Dorsolateral prefrontal cortex (tissue), 120 donors: ENCODE measurements at regions of chr5 and their contacts with region 1.

Region 1: GRCh38 chr5:69369369-69370121 is at the starts of genes AK6, RAD17 and TAF9:
- DNase-seq: peak; percentile 89 to 95 (median 94)
- H3K4me3 ChIP-seq: peak within 1 kb of the TSS; percentile 57 to 100 (median 86)
- H3K27ac ChIP-seq: peak within 1 kb of the TSS; percentile 92 to 100 (median 98)
- H3K27me3 ChIP-seq: no peaks in the 10 kb centered on the region
- CTCF ChIP-seq: peak in 11 of 56 donors; percentile 5 to 38 (median 19)
- total RNA-seq, gene AK6: 16.7 to 48.2 (median 30.6) TPM
- total RNA-seq, gene RAD17: 12.6 to 35.3 (median 22.5) TPM
- total RNA-seq, gene TAF9: 26.1 to 76.6 (median 52.9) TPM

Region 2: DNA sequence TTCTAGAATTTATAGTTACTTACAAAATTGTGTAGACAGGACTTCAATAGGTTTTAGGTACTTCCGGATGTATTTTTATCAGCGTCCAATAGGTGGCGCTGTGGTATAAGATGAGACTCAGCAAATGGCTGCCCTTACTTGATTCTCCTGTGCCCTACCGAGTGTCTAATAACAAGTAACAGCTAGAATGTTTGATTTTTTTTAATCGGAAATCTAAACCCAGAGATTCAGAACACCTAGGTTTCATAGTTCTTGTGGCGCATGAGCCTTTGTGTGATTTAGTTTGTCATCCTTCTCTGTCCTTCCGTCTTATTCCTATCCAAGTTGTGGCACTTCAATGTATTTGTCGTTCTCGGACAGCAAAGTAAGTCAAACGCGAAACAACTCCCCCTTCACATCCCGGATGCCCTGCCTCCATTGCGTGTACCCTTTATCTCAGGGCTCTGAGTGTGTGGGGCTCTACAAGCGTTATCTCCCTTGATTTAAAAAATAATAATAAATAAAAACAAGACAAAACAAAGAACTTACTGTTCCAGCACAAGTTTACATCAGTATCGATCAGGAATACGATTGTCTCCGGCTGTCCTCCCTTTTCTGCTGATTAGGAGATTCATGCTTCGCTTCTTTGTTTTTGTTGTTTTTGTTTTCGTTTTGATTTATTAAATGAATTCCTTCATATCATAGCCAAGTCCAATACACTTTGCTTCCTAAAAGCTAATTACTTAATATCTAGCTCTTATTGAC is 326.5 kb before region 1 on chr5:
- intact Hi-C with region 1: loop called in 1 of 2 experiments (anchors 10 kb)
- DNase-seq: peak in 7 of 10 donors; percentile 36 to 78 (median 55)
- H3K4me3 ChIP-seq: peak overlapping the region; percentile 23 to 78 (median 58)
- H3K27ac ChIP-seq: peak overlapping the region; percentile 5 to 93 (median 84)
- H3K27me3 ChIP-seq: no peaks in the 10 kb centered on the region
- CTCF ChIP-seq: peak; percentile 73 to 97 (median 88)

Region 3: GRCh38 chr5:69093771-69094482 is 275.6 kb before region 1 on chr5 and contains the start of gene SLC30A5:
- intact Hi-C with region 1: loop called (anchors 1 to 5 kb)
- DNase-seq: peak; percentile 94 to 100 (median 99)
- H3K4me3 ChIP-seq: peak within 1 kb of the TSS; percentile 56 to 100 (median 92)
- H3K27ac ChIP-seq: peak within 1 kb of the TSS in 58 of 59 donors; percentile 33 to 97 (median 89)
- H3K27me3 ChIP-seq: no peaks in the 10 kb centered on the region
- CTCF ChIP-seq: peak; percentile 84 to 99 (median 96)
- total RNA-seq, gene SLC30A5: 17.3 to 42.7 (median 28.2) TPM

Region 4: DNA sequence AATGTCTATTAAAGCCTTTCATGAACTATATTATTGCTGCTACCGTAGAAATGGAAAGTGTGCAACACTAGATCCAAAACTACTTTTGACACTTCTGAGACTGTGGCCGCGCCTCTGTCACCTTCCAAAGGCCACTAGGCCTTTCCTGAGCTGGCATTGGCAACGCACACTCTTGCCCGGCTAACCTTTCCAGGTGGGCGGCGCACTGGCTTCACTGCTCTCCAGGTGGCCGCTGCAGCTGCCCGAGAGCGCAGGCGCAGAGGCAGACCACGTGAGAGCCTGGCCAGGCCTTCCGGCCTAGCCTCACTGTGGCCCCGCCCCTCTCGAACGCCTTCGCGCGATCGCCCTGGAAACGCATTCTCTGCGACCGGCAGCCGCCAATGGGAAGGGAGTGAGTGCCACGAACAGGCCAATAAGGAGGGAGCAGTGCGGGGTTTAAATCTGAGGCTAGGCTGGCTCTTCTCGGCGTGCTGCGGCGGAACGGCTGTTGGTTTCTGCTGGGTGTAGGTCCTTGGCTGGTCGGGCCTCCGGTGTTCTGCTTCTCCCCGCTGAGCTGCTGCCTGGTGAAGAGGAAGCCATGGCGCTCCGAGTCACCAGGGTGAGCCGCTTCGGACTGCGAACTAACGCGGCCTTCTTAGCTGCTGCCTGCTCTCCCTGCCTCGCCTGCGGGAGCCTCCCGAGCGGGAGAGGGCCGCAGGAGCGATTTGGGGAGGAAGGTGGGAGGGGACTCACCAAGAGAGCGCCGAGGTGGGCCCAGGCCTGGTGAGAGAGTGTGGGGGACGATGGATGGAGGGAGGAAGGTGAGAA is 202.7 kb before region 1 on chr5 and contains the start of gene CCNB1:
- intact Hi-C with region 1: loop called in 1 of 2 experiments (anchors 2 kb)
- DNase-seq: peak; percentile 95 to 99 (median 98)
- H3K4me3 ChIP-seq: peak within 1 kb of the TSS; percentile 54 to 99 (median 80)
- H3K27ac ChIP-seq: peak within 1 kb of the TSS in 44 of 59 donors; percentile 15 to 87 (median 60)
- H3K27me3 ChIP-seq: no peaks in the 10 kb centered on the region
- CTCF ChIP-seq: peak in 43 of 56 donors; percentile 6 to 63 (median 37)
- total RNA-seq, gene CCNB1: 5.0 to 23.5 (median 11.9) TPM

Region 5: DNA sequence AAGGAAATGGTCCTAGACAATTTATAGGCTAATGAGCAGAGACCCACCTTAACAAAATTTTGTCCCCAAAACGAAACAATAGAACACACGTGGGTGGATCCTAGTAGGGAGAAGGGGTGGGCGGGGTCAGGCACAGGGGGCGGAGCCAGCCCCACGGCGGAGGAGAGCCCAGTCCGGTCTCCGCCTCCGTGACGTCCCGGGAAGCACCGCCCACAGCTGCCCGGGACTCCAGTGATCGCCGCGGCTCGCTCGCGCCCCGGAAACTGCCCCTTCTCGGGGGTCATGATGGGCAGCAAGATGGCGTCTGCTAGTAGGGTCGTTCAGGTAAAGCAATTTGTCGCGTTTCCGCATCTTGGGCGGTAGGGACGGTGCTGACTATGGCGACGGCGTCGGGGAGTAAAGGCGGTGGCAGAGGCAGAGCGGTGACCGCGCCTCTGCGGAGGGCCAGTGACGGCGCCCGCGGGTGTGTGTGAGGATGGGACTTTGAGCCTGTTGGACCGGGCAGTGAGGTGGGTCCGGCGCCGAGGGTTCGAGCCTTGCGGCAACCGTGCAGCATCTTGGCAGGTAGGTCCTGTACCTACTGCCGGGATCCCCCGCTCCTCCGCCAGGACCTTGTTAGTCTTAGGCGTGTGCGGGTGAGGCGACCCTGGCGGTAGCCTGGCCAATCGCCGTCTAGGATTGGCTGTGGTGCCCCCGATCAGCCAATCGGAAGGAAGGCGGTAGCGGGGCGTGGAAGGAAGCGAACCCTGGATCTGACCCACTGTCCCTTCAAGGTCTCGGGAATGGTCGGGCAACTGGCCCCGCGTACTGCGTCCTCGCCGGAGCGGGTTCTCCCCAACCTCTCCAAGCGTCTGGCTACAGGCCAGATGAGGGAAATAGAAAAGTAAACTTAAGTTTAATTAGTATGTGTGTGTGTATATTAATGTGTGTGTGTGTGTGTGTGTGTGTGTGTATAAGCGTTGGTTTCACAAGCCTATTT is 151.7 kb before region 1 on chr5:
- intact Hi-C with region 1: loop called (anchors 5 kb)
- DNase-seq: peak; percentile 93 to 98 (median 96)
- H3K4me3 ChIP-seq: peak overlapping the region; percentile 70 to 100 (median 98)
- H3K27ac ChIP-seq: peak overlapping the region; percentile 30 to 96 (median 87)
- H3K27me3 ChIP-seq: no peaks in the 10 kb centered on the region
- CTCF ChIP-seq: peak in 43 of 56 donors; percentile 6 to 54 (median 30)

Region 6: GRCh38 chr5:69334793-69335268 is 34.7 kb before region 1 on chr5:
- intact Hi-C with region 1: loop called (anchors 5 kb)
- DNase-seq: peak; percentile 79 to 88 (median 86)
- H3K4me3 ChIP-seq: peak overlapping the region in 37 of 59 donors; percentile 7 to 51 (median 32)
- H3K27ac ChIP-seq: peak overlapping the region in 4 of 59 donors; percentile 16 to 39 (median 24)
- H3K27me3 ChIP-seq: no peaks in the 10 kb centered on the region
- CTCF ChIP-seq: peak; percentile 30 to 81 (median 70)

Region 7: GRCh38 chr5:69350664-69351063 is 18.9 kb before region 1 on chr5:
- intact Hi-C with region 1: no loop called
- DNase-seq: no peak
- H3K4me3 ChIP-seq: no peak overlapping the region
- H3K27ac ChIP-seq: no peak overlapping the region
- H3K27me3 ChIP-seq: no peaks in the 10 kb centered on the region
- CTCF ChIP-seq: no peak

Region 8: DNA sequence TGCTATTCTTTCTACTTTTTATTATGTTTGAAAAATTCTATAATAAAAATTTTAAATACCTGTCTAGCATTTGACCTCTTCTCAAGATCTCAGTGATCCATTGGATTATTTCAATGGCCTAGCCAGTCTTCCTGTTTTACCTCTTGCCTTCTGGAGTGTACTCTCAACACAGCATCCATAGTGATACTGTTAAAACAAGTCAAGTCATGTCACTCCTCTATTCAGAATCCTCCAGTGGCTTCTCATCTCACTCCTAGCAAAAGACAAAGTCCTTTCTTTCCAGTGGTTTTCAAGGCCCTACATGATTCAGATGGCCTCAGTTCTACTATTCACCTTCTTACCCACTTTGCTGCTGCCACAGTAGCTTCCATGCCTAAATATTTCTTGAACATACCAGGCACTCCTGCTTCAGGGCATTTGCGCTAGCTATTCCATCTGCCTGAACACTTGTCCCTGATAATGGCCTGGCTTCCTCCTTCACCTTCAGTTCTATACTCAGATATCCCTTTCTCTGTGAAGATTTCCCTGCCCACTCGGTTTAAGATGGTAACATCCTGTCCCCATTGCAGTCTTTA is 47.2 kb after region 1 on chr5:
- intact Hi-C with region 1: no loop called
- DNase-seq: no peak
- H3K4me3 ChIP-seq: no peak overlapping the region
- H3K27ac ChIP-seq: no peak overlapping the region
- H3K27me3 ChIP-seq: no peaks in the 10 kb centered on the region
- CTCF ChIP-seq: no peak